ENCODE measurements at regions of chr5 and their contacts with region 1.

Region 1: GRCh38 chr5:140220032-140220697 is 45.2 kb downstream of the CYSTM1 start:
- DNase-seq: no peak

Region 2: DNA sequence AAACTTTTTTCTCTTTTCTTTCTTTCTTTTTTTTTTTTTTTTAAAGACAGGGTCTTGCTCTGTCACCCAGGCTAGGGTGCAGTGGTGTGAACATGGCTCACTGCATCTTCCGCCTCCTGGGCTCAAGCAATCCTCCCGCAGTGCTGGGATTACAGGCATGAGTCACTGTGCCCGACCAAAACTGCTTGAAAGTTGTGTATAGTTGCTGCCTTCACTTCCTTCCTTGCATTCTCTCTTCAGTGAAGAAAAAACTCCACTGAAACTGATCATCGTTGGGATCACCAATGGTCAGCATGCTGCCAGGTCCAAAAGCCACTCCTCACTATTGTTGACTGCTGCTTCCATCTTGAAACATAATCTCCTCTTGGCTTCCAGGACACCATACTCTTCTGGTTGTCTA is 1533.5 kb before region 1 on chr5:
- intact Hi-C with region 1: no loop called
- DNase-seq: no peak

Region 3: DNA sequence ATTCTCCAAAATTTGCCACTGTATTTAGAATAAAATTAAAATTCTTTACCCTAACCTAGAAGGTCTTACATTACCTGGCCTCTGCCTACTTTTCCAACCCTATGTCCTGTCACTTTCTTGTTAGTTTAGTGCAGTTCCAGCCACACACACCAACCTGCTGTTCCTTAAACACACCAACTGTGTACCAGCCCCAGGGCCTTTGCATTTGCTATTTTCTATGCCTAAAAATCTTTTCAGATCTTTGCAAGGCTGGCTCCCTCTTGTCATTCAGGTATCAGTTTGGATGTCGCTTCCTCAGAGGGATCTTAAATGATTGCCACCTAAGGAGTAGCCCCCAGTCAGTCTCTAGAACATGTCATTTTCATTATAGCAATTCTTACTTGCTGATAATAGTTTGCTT is 159.3 kb before region 1 on chr5:
- intact Hi-C with region 1: no loop called
- DNase-seq: no peak

Region 4: GRCh38 chr5:140182803-140183367 is 37.3 kb before region 1 on chr5:
- intact Hi-C with region 1: loop called (anchors 5 kb)
- DNase-seq: no peak

Region 5: DNA sequence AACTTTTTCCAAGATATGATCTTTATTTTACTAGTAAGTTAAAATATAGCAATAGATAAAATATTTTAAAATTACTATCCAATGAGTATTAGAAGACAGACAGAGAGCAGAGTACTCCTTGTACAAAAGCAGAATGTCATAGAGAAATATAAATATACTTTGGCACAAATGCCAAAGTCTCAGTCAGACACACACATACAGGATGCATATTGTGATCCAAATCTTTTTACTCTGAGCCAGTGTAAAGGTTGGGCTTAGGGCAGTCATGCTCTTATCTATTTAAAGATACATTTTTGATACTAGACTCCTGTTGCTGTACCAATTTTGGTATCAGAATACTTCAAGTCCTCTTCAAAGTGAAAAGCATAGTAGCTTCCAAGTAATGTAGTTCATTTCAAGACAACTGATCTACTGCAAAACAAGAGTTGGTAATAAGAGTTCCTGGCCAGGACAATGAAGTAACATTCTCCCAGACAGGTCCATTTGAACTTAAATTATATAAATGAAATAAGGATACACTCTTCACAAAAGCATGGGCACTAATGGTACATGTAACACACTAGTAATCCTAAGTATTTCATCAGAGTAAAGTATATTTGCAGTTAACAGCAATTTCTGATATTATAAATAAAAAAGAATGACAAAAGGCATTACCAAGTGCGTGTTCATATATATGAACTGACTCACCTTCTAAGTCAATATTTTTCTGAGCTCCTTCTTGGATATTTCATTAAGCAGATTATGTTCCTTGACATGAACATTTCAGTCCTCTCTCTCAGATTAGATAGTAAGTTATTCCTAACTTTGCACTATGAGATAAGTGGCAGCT is 72.3 kb after region 1 on chr5:
- intact Hi-C with region 1: no loop called
- DNase-seq: no peak

Measured in cardiac septum (tissue), 1 donor.